ENCODE measurements at regions of chr9 and their contacts with region 1.

Region 1: DNA sequence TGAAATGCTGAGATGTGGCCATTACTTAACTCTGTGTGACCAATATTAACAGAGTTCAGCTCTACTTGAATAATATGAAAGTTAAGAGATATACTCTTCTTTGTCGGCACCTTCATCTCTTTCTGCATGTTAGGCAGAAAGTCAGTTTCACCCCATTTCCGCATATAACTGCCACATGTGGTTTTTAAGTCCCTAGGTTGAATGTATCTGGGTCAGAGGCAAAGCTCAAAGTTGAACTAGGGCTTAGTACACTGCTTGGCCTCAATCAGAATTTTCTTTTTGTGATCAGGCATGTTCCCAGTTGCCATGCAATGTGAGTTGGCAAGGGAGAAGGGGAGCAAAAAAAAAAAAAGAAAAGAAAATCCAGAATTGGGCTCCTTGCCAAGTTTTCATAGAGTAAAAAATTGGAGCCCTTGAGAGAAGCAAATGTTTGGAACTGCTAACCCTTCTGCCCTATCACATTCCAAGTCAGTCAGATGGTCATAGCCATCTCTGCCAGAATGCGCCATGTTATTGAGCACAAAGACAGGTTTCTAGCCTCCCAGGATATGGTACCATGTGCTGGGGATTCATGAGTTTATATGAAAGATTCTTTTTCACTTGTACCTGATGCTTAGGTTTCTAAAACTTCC is 251.2 kb upstream of the RORB start:
- DNase-seq: no peak
- ATAC-seq: no peak

Region 2: GRCh38 chr9:74309654-74310053 is 63.7 kb after region 1 on chr9:
- intact Hi-C with region 1: loop called (anchors 2 kb)
- DNase-seq: no peak
- ATAC-seq: no peak